GM13976 (cell line): ENCODE measurements at regions of chr1 and their contacts with region 1.

Region 1: GRCh38 chr1:153572569-153573015 is 6.9 kb upstream of the S100A2 start:
- DNase-seq: peak; percentile 74
- CTCF ChIP-seq: peak; percentile 70

Region 2: DNA sequence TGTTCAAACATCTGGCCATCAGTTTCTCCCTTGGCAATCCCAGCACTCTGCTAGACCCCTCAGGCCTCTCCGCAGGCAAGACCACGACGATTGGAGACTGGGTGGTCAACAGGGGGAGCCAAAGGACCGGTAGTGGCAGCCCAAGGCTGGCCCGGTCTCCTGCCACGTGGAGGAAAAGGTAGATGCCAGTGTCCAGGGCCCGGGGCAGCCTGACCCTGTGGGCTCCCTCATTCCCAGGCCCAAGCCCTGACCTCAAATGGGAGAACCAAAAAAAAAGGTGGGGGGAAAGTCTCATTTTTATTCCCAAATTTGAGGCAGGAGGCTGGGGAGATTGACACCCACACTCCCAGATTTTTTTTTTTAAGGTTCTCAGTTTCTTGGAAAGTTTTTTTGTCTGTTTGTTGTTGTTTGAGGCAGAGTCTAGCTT is 61.6 kb before region 1 on chr1:
- in situ Hi-C with region 1: loop called (anchors 5 kb)
- DNase-seq: peak; percentile 90
- CTCF ChIP-seq: peak; percentile 90

Region 3: GRCh38 chr1:154081386-154082126 is 509.0 kb after region 1 on chr1:
- in situ Hi-C with region 1: no loop called
- DNase-seq: no peak
- CTCF ChIP-seq: no peak